ENCODE measurements at regions of chr5 and their contacts with region 1.

Region 1: GRCh38 chr5:157312492-157312891 is 46.6 kb downstream of the CYFIP2 start:
- DNase-seq: peak; percentile 49
- H3K4me3 Mint-ChIP-seq: no peak overlapping the region
- H3K27ac Mint-ChIP-seq: peak overlapping the region; percentile 87
- H3K4me1 Mint-ChIP-seq: peaks cover 29% of the 10 kb centered on the region
- H3K27me3 Mint-ChIP-seq: no peaks in the 10 kb centered on the region

Region 2: GRCh38 chr5:157148734-157149615 is 163.5 kb before region 1 on chr5:
- intact Hi-C with region 1: loop called (anchors 1 kb)
- DNase-seq: peak; percentile 74
- H3K4me3 Mint-ChIP-seq: no peak overlapping the region
- H3K27ac Mint-ChIP-seq: peak overlapping the region; percentile 67
- H3K4me1 Mint-ChIP-seq: peaks cover 43% of the 10 kb centered on the region
- H3K27me3 Mint-ChIP-seq: no peaks in the 10 kb centered on the region

Region 3: GRCh38 chr5:157265714-157266285 is 46.7 kb before region 1 on chr5 and contains the start of gene CYFIP2:
- intact Hi-C with region 1: loop called (anchors 2 kb)
- DNase-seq: peak; percentile 82
- H3K4me3 Mint-ChIP-seq: peak within 1 kb of the TSS; percentile 93
- H3K27ac Mint-ChIP-seq: peak within 1 kb of the TSS; percentile 95
- H3K4me1 Mint-ChIP-seq: peaks cover 78% of the 10 kb centered on the region
- H3K27me3 Mint-ChIP-seq: no peaks in the 10 kb centered on the region
- total RNA-seq, gene CYFIP2: 173 and 175 TPM in 2 replicates

Region 4: GRCh38 chr5:157350939-157351801 is 38.7 kb after region 1 on chr5:
- intact Hi-C with region 1: loop called (anchors 2 kb)
- DNase-seq: no peak
- H3K4me3 Mint-ChIP-seq: peak overlapping the region; percentile 25
- H3K27ac Mint-ChIP-seq: peak overlapping the region; percentile 89
- H3K4me1 Mint-ChIP-seq: peaks cover 55% of the 10 kb centered on the region
- H3K27me3 Mint-ChIP-seq: no peaks in the 10 kb centered on the region

Region 5: DNA sequence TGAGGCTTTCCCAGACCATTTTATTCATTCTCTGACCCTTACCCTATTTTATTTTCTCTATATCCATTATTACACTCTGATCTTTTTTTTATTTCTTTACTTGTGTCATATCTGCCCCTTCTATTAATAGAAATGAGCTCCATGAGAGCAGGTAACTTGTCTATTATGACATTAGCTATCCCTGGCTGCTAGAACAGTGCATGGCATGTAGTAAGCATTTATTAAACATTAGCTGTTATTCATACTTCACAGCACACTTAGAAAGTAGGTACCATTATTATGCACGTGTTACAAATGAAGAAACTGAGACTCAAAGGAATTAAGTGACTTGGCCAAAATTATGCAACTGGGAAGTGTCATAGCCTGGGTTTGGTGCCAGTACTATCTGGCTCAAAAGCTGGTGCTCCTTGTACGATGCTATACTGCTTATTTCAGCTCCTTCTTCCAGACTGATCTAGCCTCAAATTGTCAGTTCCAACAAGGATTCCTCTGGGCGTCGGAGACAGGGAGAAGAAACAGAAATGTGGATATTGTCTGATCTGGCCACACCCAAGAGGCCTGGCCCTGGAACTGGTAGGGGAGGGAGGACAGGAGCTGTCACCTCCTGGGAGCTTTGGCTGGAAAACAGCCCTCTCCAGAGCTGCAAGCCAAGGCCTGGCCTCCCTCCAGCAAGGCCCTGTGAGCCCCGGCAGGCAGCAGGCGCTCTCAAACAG is 136.7 kb after region 1 on chr5:
- intact Hi-C with region 1: no loop called
- DNase-seq: no peak
- H3K4me3 Mint-ChIP-seq: no peak overlapping the region
- H3K27ac Mint-ChIP-seq: no peak overlapping the region
- H3K4me1 Mint-ChIP-seq: no peaks in the 10 kb centered on the region
- H3K27me3 Mint-ChIP-seq: peaks cover 3% of the 10 kb centered on the region